ENCODE measurements at regions of chr1 and their contacts with region 1.

Region 1: GRCh38 chr1:93701619-93702018 is 20.0 kb upstream of the BCAR3 start:
- DNase-seq: no peak
- H3K4me3 ChIP-seq: no peak overlapping the region
- H3K27ac ChIP-seq: no peak overlapping the region
- H3K4me1 ChIP-seq: peaks cover 78% of the 10 kb centered on the region
- CTCF ChIP-seq: no peak

Region 2: GRCh38 chr1:92975551-92976232 is 725.9 kb before region 1 on chr1:
- CTCF ChIA-PET with region 1: no interaction called
- POLR2A ChIA-PET with region 1: no interaction called
- intact Hi-C with region 1: loop called (anchors 5 kb)
- DNase-seq: peak; percentile 92
- H3K4me3 ChIP-seq: peak overlapping the region; percentile 44
- H3K27ac ChIP-seq: peak overlapping the region; percentile 96
- H3K4me1 ChIP-seq: peaks cover 99% of the 10 kb centered on the region
- CTCF ChIP-seq: no peak

Region 3: DNA sequence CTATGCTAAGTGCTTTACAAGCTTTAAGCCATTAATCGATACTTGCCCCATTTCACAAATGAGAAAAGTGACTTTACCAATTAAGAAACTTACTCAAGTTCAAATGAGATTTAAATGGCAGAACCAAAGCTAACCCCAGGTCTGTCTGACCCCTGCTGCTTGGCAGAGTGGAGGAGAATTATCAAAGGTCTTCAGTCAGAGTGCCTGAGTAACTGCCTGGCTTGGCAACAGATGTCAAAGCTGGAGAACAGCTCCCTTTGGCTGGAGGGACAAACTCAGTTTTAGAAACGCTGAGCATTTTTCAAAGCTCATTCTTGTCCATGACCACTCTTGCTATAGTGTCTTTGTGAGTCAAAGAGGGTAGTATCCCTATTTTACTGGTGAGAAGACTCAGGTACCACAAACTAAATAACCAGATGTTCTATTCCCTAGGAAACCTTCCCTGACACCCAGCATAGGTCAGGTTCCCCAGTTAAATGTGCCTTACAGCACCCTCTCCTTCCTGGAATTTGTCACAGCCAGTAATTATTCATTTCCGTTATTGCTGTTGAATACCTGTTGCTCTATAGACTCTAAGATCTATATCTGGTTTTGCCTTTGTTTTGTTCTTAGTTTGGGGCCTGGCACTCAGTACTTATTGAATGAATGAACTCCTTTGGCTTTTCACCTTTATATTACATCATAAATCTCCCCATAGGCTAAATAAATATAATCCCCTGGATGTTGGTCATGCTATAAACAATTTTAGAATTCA is 14.9 kb before region 1 on chr1:
- CTCF ChIA-PET with region 1: interaction called, 12 read pairs
- POLR2A ChIA-PET with region 1: interaction called, 497 read pairs
- intact Hi-C with region 1: loop called (anchors 2 kb)
- DNase-seq: no peak
- H3K4me3 ChIP-seq: peak overlapping the region; percentile 33
- H3K27ac ChIP-seq: peak overlapping the region; percentile 27
- H3K4me1 ChIP-seq: peaks cover 94% of the 10 kb centered on the region
- CTCF ChIP-seq: no peak

Region 4: GRCh38 chr1:93715529-93716126 is 14.0 kb after region 1 on chr1:
- CTCF ChIA-PET with region 1: interaction called, 14 read pairs
- POLR2A ChIA-PET with region 1: interaction called, 94 read pairs
- intact Hi-C with region 1: no loop called
- DNase-seq: peak; percentile 78
- H3K4me3 ChIP-seq: peak overlapping the region; percentile 37
- H3K27ac ChIP-seq: peak overlapping the region; percentile 77
- H3K4me1 ChIP-seq: peaks cover 62% of the 10 kb centered on the region
- CTCF ChIP-seq: no peak

Region 5: DNA sequence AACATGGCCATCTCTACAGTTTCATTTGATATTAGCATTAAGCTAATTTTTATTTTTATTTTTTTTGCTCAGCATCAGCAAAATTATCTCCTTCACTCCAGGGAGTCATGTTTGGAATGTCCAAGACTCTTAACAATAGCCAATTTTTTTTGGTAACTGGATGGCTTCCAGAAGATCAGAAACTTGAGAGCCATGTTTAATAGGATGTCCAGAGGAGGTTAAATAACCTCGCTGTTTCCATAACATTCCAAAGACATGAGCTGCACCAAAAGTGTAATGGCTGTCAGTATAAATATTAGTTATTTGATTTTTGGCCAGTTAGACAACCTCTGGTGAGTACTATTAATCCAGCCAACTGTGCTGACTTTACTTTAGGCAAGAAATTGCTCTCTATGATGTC is 96.7 kb after region 1 on chr1:
- CTCF ChIA-PET with region 1: no interaction called
- POLR2A ChIA-PET with region 1: no interaction called
- intact Hi-C with region 1: no loop called
- DNase-seq: no peak
- H3K4me3 ChIP-seq: no peak overlapping the region
- H3K27ac ChIP-seq: no peak overlapping the region
- H3K4me1 ChIP-seq: no peaks in the 10 kb centered on the region
- CTCF ChIP-seq: no peak